HepG2 (cell line): ENCODE measurements at regions of chr16 and their contacts with region 1.

Region 1: GRCh38 chr16:21584817-21585216 is 14.6 kb upstream of the METTL9 start:
- DNase-seq: no peak
- ATAC-seq: peak; percentile 12; the same call in 1 of the 3 replicates
- H3K4me3 ChIP-seq: no peak overlapping the region
- H3K27ac ChIP-seq: no peak overlapping the region
- H3K4me1 ChIP-seq: peaks cover 12% of the 10 kb centered on the region; the same call in 1 of the 2 replicates
- H3K27me3 ChIP-seq: peaks cover 0 to 4% of the 10 kb centered on the region in 2 experiments; a peak in 1 of 5 replicates
- CTCF ChIP-seq: no peak
- EP300 ChIP-seq: no peak
- POLR2A ChIP-seq: no peak
- RAD21 ChIP-seq: no peak

Region 2: GRCh38 chr16:21568502-21569189 is 16.2 kb before region 1 on chr16:
- CTCF ChIA-PET with region 1: no interaction called
- POLR2A ChIA-PET with region 1: no interaction called
- in situ Hi-C with region 1: no loop called
- intact Hi-C with region 1: no loop called
- DNase-seq: no peak
- ATAC-seq: no peak
- H3K4me3 ChIP-seq: no peak overlapping the region
- H3K27ac ChIP-seq: no peak overlapping the region
- H3K4me1 ChIP-seq: peaks cover 12% of the 10 kb centered on the region
- H3K27me3 ChIP-seq: peaks cover 4 to 36% of the 10 kb centered on the region in 2 experiments
- CTCF ChIP-seq: no peak
- EP300 ChIP-seq: no peak
- POLR2A ChIP-seq: no peak
- RAD21 ChIP-seq: no peak

Region 3: GRCh38 chr16:21638573-21638975 is 53.8 kb after region 1 on chr16:
- CTCF ChIA-PET with region 1: interaction called, 40 read pairs
- POLR2A ChIA-PET with region 1: no interaction called
- in situ Hi-C with region 1: no loop called
- intact Hi-C with region 1: loop called (anchors 1 kb)
- DNase-seq: peak; percentile 91
- ATAC-seq: peak; percentile 93
- H3K4me3 ChIP-seq: no peak overlapping the region
- H3K27ac ChIP-seq: no peak overlapping the region
- H3K4me1 ChIP-seq: peaks cover 29% of the 10 kb centered on the region
- H3K27me3 ChIP-seq: no peaks in the 10 kb centered on the region
- CTCF ChIP-seq: no peak
- EP300 ChIP-seq: peak; percentile 91 to 93; a peak in 3 of 4 replicates
- POLR2A ChIP-seq: no peak
- RAD21 ChIP-seq: peak; percentile 38; the same call in 1 of the 2 replicates

Region 4: DNA sequence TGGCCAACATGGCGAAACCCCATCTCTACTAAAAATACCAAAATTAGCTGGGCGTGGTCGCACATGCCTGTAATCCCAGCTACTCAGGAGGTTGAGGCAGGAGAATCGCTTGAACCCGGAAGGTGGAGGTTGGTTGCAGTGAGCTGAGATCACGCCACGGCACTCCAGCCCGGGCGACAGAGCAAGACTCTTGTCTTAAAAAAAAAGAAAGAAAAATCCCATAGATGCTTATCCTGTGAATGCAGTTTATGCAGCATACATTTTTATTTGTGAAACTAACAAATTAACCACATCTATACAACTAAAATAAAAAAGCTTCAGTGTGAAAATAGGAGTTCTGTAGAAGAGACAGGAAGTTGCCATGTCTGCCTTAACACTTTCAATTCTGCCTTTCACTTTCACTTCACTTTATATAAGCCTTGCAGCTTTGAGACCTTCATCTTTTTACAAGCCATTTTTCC is 60.5 kb after region 1 on chr16:
- CTCF ChIA-PET with region 1: interaction called, 40 read pairs
- POLR2A ChIA-PET with region 1: no interaction called
- in situ Hi-C with region 1: no loop called
- intact Hi-C with region 1: loop called (anchors 1 kb)
- DNase-seq: no peak
- ATAC-seq: no peak
- H3K4me3 ChIP-seq: no peak overlapping the region
- H3K27ac ChIP-seq: no peak overlapping the region
- H3K4me1 ChIP-seq: peaks cover 23% of the 10 kb centered on the region
- H3K27me3 ChIP-seq: no peaks in the 10 kb centered on the region
- CTCF ChIP-seq: no peak
- EP300 ChIP-seq: no peak
- POLR2A ChIP-seq: no peak
- RAD21 ChIP-seq: no peak

Region 5: DNA sequence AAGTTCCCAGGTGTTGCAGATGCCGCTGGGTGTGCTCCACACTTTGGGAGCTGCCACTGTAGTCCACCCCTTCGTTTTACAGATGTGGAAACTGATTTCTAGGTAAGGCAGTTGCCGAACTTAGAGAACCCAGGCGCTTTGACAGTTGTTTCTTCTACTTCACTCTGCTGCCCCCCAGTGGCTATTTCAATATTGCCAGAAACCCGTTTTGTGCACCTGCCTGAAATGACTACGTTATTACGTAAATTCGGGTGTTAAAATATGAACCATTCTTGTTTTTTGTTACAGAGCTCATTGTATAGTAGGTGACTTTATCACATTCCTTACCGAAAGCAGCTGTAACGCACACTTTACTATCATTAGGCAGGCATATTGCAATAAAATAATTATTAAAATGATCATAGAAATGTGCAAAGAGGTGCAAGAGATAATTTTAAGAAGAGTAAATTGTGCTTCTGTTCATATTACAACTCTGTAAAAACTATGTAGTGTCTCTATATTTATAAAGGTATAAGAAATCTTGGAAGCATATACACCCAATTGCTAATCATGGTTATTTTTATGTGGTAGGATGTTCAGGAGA is 123.8 kb after region 1 on chr16:
- CTCF ChIA-PET with region 1: interaction called, 9 read pairs
- POLR2A ChIA-PET with region 1: no interaction called
- in situ Hi-C with region 1: no loop called
- intact Hi-C with region 1: loop called (anchors 1 kb)
- DNase-seq: peak; percentile 78
- ATAC-seq: peak; percentile 64
- H3K4me3 ChIP-seq: no peak overlapping the region
- H3K27ac ChIP-seq: no peak overlapping the region
- H3K4me1 ChIP-seq: no peaks in the 10 kb centered on the region
- H3K27me3 ChIP-seq: peaks cover 3 to 50% of the 10 kb centered on the region in 2 experiments; a peak in 4 of 5 replicates
- CTCF ChIP-seq: peak; percentile 91
- EP300 ChIP-seq: no peak
- POLR2A ChIP-seq: no peak
- RAD21 ChIP-seq: peak; percentile 84

Region 6: GRCh38 chr16:22694887-22695382 is 1110.1 kb after region 1 on chr16:
- CTCF ChIA-PET with region 1: no interaction called
- POLR2A ChIA-PET with region 1: interaction called, 3 read pairs
- in situ Hi-C with region 1: loop called (anchors 5 kb)
- intact Hi-C with region 1: no loop called
- DNase-seq: no peak
- ATAC-seq: no peak
- H3K4me3 ChIP-seq: no peak overlapping the region
- H3K27ac ChIP-seq: no peak overlapping the region
- H3K4me1 ChIP-seq: no peaks in the 10 kb centered on the region
- H3K27me3 ChIP-seq: peaks cover 0 to 21% of the 10 kb centered on the region in 2 experiments; a peak in 3 of 5 replicates
- CTCF ChIP-seq: no peak
- EP300 ChIP-seq: no peak
- POLR2A ChIP-seq: no peak
- RAD21 ChIP-seq: no peak